ENCODE measurements at regions of chr5 and their contacts with region 1.

Region 1: GRCh38 chr5:112160652-112161391 is 258.3 kb downstream of the EPB41L4A start:
- DNase-seq: peak; percentile 85 to 96 (median 92)
- ATAC-seq: peak; percentile 99
- H3K4me3 ChIP-seq: peak overlapping the region; percentile 74 to 82
- H3K4me3 Mint-ChIP-seq: peak overlapping the region; percentile 95
- H3K27ac ChIP-seq: peak overlapping the region; percentile 58 to 70
- H3K27ac Mint-ChIP-seq: peak overlapping the region; percentile 93
- H3K4me1 ChIP-seq: peaks cover 20% of the 10 kb centered on the region
- H3K4me1 Mint-ChIP-seq: peaks cover 40% of the 10 kb centered on the region
- H3K27me3 ChIP-seq: no peaks in the 10 kb centered on the region
- H3K27me3 Mint-ChIP-seq: no peaks in the 10 kb centered on the region
- CTCF ChIP-seq: peak; percentile 85

Region 2: GRCh38 chr5:111092062-111092853 is 1068.6 kb before region 1 on chr5 and contains the start of gene WDR36:
- CTCF ChIA-PET with region 1: no interaction called
- POLR2A ChIA-PET with region 1: interaction called, 7 read pairs
- intact Hi-C with region 1: loop called (anchors 1 to 5 kb)
- DNase-seq: peak; percentile 77 to 94 (median 86)
- ATAC-seq: peak; percentile 92
- H3K4me3 ChIP-seq: peak within 1 kb of the TSS; percentile 96
- H3K4me3 Mint-ChIP-seq: peak within 1 kb of the TSS; percentile 95
- H3K27ac ChIP-seq: peak within 1 kb of the TSS; percentile 86 to 89
- H3K27ac Mint-ChIP-seq: peak within 1 kb of the TSS; percentile 94
- H3K4me1 ChIP-seq: peaks cover 24% of the 10 kb centered on the region
- H3K4me1 Mint-ChIP-seq: peaks cover 38% of the 10 kb centered on the region
- H3K27me3 ChIP-seq: no peaks in the 10 kb centered on the region
- H3K27me3 Mint-ChIP-seq: peaks cover 4% of the 10 kb centered on the region
- CTCF ChIP-seq: no peak
- total RNA-seq, gene WDR36: 29.5 to 32.6 TPM

Region 3: DNA sequence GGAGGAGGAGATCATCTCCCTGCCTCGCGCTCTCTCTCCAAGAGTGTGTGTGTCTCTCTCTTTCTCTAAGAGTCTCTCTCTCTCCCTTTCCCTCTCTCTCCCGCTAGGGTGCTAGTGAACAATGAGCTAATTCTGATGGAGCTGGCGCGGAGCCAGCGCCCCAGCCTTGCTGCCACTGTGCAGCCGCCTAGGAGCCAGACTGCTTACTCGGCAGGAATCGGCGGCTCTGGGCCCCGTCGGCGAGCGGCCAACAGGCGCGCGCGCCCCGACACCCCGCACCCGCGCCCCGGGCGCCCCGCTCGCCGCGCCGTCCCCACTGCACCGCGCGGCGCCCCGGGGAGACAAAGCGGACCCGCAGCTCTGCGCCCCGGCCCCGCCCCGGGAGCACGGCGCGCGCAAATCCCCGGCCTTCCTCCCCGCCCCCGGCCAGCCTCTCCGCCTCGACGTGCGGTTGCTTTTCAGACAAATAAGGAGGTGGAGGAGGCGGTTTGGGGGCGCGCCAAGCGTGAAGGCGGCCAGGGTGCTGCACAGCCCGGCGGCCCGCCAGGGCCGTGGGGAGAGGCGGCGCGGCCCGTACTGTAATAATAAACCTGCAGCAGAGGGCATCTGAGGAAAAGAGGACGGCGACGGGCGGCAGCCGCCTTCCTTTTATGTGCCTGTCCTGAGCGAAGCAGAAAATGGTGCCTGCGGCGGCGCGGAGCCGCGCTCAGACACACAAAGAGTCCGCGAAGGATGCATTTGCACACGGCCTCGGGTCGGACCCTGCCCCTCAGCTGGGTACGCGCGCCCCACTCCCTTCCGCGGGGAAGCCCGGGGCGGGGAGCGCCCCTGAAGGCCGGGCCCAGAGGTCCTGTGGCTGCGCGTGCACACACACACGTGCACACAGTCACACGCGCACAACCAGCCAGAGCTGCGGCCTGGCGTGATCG is 403.2 kb before region 1 on chr5:
- CTCF ChIA-PET with region 1: no interaction called
- POLR2A ChIA-PET with region 1: interaction called, 6 read pairs
- intact Hi-C with region 1: loop called (anchors 5 kb)
- DNase-seq: peak; percentile 39 to 89 (median 81)
- ATAC-seq: peak; percentile 81
- H3K4me3 ChIP-seq: peak overlapping the region; percentile 59 to 88
- H3K4me3 Mint-ChIP-seq: peak overlapping the region; percentile 90
- H3K27ac ChIP-seq: peak overlapping the region; percentile 51 to 74
- H3K27ac Mint-ChIP-seq: peak overlapping the region; percentile 90
- H3K4me1 ChIP-seq: peaks cover 13% of the 10 kb centered on the region
- H3K4me1 Mint-ChIP-seq: peaks cover 21% of the 10 kb centered on the region
- H3K27me3 ChIP-seq: no peaks in the 10 kb centered on the region
- H3K27me3 Mint-ChIP-seq: no peaks in the 10 kb centered on the region
- CTCF ChIP-seq: no peak

Region 4: DNA sequence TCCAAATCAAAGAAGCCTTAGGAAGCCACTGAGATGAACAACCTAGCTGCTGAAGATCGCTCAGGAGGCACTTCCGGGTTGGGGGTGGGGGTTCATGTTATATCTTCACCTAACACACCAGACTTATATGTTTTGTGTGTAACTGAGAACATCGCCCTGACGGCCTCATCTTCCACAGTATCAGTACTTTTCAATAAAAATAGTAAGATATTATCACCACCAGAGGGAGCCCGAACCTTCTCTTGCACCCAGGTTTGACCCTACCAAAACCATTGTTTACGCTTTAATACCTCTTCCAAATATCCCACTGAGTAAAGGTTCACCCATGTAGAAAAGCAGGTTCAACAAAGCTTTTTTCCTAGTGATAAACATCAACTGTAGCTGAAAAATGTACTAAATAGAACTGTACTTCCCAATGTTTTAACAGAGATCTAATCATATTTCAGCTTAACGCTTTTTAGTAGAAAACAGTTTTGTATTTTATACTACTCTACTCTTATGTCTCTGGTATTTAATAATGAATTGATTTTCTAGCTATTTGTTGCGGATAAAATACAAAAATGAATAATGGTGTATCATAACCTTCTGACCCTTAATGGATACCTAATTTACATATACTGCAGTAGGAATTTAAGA is 14.3 kb after region 1 on chr5:
- CTCF ChIA-PET with region 1: interaction called, 20 read pairs
- POLR2A ChIA-PET with region 1: interaction called, 3 read pairs
- intact Hi-C with region 1: no loop called
- DNase-seq: peak in 5 of 9 experiments; percentile 4 to 65 (median 28)
- ATAC-seq: peak; percentile 56
- H3K4me3 ChIP-seq: no peak overlapping the region
- H3K4me3 Mint-ChIP-seq: no peak overlapping the region
- H3K27ac ChIP-seq: no peak overlapping the region
- H3K27ac Mint-ChIP-seq: no peak overlapping the region
- H3K4me1 ChIP-seq: no peaks in the 10 kb centered on the region
- H3K4me1 Mint-ChIP-seq: peaks cover 4% of the 10 kb centered on the region
- H3K27me3 ChIP-seq: no peaks in the 10 kb centered on the region
- H3K27me3 Mint-ChIP-seq: peaks cover 13% of the 10 kb centered on the region
- CTCF ChIP-seq: peak; percentile 62

Region 5: GRCh38 chr5:112757468-112758208 is 596.8 kb after region 1 on chr5:
- CTCF ChIA-PET with region 1: interaction called, 3 read pairs
- POLR2A ChIA-PET with region 1: interaction called, 3 read pairs
- intact Hi-C with region 1: loop called in 1 of 2 experiments (anchors 5 kb)
- DNase-seq: peak in 3 of 9 experiments; percentile 51 to 76 (median 69)
- ATAC-seq: peak; percentile 84
- H3K4me3 ChIP-seq: no peak overlapping the region
- H3K4me3 Mint-ChIP-seq: no peak overlapping the region
- H3K27ac ChIP-seq: no peak overlapping the region
- H3K27ac Mint-ChIP-seq: peak overlapping the region; percentile 34
- H3K4me1 ChIP-seq: no peaks in the 10 kb centered on the region
- H3K4me1 Mint-ChIP-seq: peaks cover 12% of the 10 kb centered on the region
- H3K27me3 ChIP-seq: no peaks in the 10 kb centered on the region
- H3K27me3 Mint-ChIP-seq: no peaks in the 10 kb centered on the region
- CTCF ChIP-seq: peak; percentile 83

Region 6: DNA sequence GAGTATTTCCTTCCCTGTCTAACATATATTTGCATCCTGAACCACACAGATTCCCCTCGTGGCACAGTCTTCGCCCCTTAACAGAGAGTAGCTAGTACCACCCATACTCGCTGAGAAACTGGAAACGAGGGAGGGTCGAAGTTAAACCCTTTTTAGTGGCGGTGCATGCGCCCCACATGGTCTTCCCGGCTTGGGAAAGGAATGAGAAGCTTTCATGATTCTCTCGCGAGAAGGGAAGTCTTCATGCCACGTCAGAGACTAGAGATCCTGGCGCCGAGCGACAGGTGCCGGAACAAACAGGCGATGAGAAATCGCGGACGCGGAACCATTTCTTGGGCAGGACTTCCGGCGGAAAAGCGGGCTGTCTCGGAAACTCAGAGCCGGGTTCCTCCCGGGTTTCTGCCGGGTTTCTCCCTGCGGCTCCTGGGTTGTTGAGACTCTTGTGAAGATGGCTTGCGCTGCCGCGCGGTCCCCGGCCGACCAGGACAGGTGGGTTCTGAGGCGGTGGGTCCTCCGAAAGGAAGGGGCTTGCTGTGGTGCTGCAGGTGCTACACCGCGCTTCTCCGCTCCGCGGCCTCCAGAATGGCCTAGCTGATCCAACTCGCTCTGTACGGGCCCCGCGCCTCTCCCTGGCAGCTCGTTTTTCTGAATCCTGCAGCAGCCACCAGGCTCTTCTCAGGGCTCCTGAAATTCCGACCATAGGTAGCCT is 700.3 kb after region 1 on chr5 and contains the start of gene SRP19:
- CTCF ChIA-PET with region 1: no interaction called
- POLR2A ChIA-PET with region 1: no interaction called
- intact Hi-C with region 1: loop called (anchors 2 to 10 kb)
- DNase-seq: peak; percentile 82 to 97 (median 91)
- ATAC-seq: peak; percentile 92
- H3K4me3 ChIP-seq: peak within 1 kb of the TSS; percentile 64 to 99
- H3K4me3 Mint-ChIP-seq: peak within 1 kb of the TSS; percentile 97
- H3K27ac ChIP-seq: peak within 1 kb of the TSS; percentile 82 to 93
- H3K27ac Mint-ChIP-seq: peak within 1 kb of the TSS; percentile 99
- H3K4me1 ChIP-seq: peaks cover 35% of the 10 kb centered on the region
- H3K4me1 Mint-ChIP-seq: peaks cover 43% of the 10 kb centered on the region
- H3K27me3 ChIP-seq: no peaks in the 10 kb centered on the region
- H3K27me3 Mint-ChIP-seq: peaks cover 8% of the 10 kb centered on the region
- CTCF ChIP-seq: no peak
- total RNA-seq, gene SRP19: 50.0 to 52.0 TPM

Region 7: DNA sequence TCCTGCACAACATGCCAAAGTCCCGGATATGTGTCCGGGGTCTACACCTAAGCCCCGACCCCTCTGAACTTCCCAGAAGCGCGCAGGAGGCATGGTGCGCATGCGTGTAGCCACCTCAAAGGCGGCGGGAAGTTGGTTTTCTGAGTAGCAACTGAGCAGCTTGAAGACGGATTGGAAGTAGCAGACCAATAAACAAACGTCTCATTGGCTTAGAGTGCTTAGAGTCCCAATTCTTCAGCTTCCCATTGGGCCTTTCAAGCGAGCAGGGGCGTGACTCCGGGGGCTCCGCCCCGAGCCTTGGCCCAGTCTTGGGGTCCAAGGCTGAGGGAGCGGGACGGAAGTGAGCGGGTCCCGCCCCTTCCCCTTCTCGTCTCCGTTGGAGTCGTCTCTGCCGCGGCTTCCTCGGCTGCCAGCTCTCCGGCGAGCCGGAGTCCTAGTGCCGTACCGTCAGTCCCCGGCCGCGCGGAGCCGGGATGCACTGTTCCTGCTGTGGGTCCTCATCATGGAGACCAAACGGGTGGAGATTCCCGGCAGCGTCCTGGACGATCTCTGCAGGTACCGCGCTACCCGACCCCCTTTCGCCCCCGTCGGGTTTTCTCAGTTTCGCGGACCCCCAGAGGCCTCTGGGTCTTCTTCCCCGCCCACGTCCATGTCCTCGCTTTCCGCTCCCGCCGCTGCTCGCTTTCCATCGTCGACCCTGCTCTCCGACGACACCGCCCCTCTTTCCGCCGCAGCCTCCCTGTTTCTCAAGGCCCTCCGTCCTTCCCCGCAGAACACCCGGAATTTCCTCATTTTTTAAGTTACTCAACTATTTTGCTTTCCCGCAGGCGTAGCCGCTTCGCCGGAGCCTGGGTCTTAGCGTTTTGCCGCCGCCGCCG is 815.8 kb after region 1 on chr5 and contains the start of gene DCP2:
- CTCF ChIA-PET with region 1: no interaction called
- POLR2A ChIA-PET with region 1: no interaction called
- intact Hi-C with region 1: loop called in 1 of 2 experiments (anchors 10 kb)
- DNase-seq: peak; percentile 88 to 99 (median 95)
- ATAC-seq: peak; percentile 96
- H3K4me3 ChIP-seq: peak within 1 kb of the TSS; percentile 57 to 98
- H3K4me3 Mint-ChIP-seq: peak within 1 kb of the TSS; percentile 100
- H3K27ac ChIP-seq: peak within 1 kb of the TSS; percentile 81
- H3K27ac Mint-ChIP-seq: peak within 1 kb of the TSS; percentile 97
- H3K4me1 ChIP-seq: peaks cover 24% of the 10 kb centered on the region
- H3K4me1 Mint-ChIP-seq: peaks cover 43% of the 10 kb centered on the region
- H3K27me3 ChIP-seq: no peaks in the 10 kb centered on the region
- H3K27me3 Mint-ChIP-seq: no peaks in the 10 kb centered on the region
- CTCF ChIP-seq: no peak
- total RNA-seq, gene DCP2: 65.4 to 69.8 TPM